Naive thymus-derived CD4-positive, alpha-beta T cell (primary cell): ENCODE measurements at regions of chrX and their contacts with region 1.

Region 1: DNA sequence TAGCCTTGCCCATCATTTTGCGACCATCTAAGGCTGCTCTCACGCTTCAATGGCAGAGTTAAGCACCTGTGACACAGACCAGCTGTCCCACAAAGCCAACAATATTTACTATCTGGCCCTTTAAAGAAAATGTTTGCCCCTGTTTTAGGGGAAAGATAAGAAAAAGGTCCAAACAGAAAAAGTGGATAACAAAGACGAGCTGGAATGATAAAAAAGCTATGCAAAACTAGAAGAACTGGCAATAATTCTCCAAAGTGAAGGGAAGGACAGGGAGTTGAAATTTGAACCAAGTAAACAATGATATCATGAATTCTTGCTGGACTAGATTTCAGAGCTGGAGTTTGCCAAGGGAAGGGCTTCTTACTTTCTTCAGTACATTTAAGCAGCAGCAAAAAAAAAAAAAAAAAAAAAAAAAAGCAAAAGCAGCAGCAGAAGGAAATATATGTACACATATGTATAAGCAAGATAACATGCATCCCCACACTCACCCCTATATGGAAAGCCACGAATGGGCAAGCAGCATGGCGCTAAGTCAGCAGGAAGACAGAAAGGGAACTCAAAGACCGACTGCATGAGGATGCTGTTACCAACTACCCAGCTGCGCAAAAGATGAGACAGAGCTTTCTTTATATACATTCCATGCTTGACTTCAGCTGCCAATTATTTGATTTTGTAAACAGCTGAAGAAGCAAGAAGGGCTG is 12.5 kb downstream of the TRAPPC2 start:
- DNase-seq: no peak
- ATAC-seq: no peak
- H3K4me3 ChIP-seq: no peak overlapping the region
- H3K4me3 Mint-ChIP-seq: no peak overlapping the region
- H3K27ac ChIP-seq: no peak overlapping the region
- H3K27ac Mint-ChIP-seq: peak overlapping the region in 5 of 9 donors; percentile 19 to 78 (median 47)
- H3K4me1 ChIP-seq: peaks cover 4 to 35% of the 10 kb centered on the region in 2 donors
- H3K4me1 Mint-ChIP-seq: peaks cover 20 to 78% (median 53%) of the 10 kb centered on the region in 7 donors
- H3K27me3 ChIP-seq: no peaks in the 10 kb centered on the region
- H3K27me3 Mint-ChIP-seq: no peaks in the 10 kb centered on the region

Region 2: DNA sequence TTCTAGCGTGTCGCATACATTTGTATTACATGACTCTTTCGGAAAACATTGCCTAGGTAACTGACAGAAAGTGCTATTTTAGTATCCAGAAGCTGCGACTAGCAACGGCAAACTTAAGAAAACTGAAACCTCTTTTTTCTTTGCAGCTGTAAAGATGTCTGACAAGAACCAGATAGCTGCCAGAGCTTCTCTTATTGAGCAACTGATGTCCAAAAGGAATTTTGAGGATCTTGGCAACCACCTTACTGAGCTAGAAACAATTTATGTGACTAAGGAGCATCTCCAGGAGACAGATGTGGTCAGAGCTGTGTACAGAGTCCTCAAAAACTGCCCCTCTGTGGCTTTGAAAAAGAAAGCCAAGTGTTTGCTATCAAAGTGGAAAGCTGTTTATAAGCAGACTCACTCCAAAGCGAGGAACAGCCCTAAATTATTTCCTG is 59.6 kb before region 1 on chrX:
- CTCF ChIA-PET with region 1: no interaction called
- POLR2A ChIA-PET with region 1: no interaction called
- intact Hi-C with region 1: no loop called
- DNase-seq: no peak
- ATAC-seq: no peak
- H3K4me3 ChIP-seq: no peak overlapping the region
- H3K4me3 Mint-ChIP-seq: no peak overlapping the region
- H3K27ac ChIP-seq: no peak overlapping the region
- H3K27ac Mint-ChIP-seq: no peak overlapping the region
- H3K4me1 ChIP-seq: no peaks in the 10 kb centered on the region
- H3K4me1 Mint-ChIP-seq: peaks cover 0 to 13% (median 11%) of the 10 kb centered on the region in 7 donors
- H3K27me3 ChIP-seq: no peaks in the 10 kb centered on the region
- H3K27me3 Mint-ChIP-seq: no peaks in the 10 kb centered on the region

Region 3: DNA sequence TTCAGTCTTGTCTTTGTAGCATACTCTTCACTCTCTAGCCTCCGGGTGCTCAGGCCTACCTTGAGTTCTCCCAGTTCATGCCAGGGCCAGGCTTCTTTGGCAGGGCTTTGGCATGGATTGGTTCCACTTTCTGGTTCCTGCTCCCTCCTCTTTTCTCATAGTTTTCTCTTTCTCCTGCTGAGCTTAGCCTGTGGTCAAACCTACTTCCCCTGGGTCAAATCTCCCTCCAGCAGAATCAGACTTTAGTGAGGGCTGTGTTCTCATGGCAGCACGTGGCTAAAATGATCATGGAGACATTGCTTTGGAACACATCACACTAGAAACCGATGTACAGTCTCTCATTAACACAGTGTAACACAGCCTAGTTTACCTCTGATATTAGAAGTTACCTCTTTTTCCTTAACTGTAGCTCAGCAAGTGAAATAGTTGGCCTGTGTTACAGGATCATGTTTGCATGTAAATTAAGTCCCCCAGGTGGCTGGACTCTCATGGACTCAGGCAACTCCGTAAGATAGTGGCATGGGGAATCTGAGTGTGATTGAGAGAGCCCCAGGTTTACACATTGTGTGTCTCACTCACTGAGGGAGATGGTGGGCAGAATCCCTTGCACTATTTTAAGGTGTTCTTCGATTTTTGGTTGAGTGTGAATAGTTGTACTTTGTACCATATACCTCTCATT is 19.7 kb before region 1 on chrX:
- CTCF ChIA-PET with region 1: no interaction called
- POLR2A ChIA-PET with region 1: interaction called, 3 read pairs
- intact Hi-C with region 1: loop called in 1 of 2 experiments (anchors 2 kb)
- DNase-seq: no peak
- ATAC-seq: no peak
- H3K4me3 ChIP-seq: no peak overlapping the region
- H3K4me3 Mint-ChIP-seq: peak overlapping the region in 3 of 10 donors; percentile 5 to 31 (median 13)
- H3K27ac ChIP-seq: peak overlapping the region; percentile 34
- H3K27ac Mint-ChIP-seq: peak overlapping the region in 6 of 9 donors; percentile 31 to 86 (median 66)
- H3K4me1 ChIP-seq: peaks cover 0 to 22% of the 10 kb centered on the region in 2 donors
- H3K4me1 Mint-ChIP-seq: peaks cover 14 to 64% (median 32%) of the 10 kb centered on the region in 7 donors
- H3K27me3 ChIP-seq: no peaks in the 10 kb centered on the region
- H3K27me3 Mint-ChIP-seq: no peaks in the 10 kb centered on the region

Region 4: DNA sequence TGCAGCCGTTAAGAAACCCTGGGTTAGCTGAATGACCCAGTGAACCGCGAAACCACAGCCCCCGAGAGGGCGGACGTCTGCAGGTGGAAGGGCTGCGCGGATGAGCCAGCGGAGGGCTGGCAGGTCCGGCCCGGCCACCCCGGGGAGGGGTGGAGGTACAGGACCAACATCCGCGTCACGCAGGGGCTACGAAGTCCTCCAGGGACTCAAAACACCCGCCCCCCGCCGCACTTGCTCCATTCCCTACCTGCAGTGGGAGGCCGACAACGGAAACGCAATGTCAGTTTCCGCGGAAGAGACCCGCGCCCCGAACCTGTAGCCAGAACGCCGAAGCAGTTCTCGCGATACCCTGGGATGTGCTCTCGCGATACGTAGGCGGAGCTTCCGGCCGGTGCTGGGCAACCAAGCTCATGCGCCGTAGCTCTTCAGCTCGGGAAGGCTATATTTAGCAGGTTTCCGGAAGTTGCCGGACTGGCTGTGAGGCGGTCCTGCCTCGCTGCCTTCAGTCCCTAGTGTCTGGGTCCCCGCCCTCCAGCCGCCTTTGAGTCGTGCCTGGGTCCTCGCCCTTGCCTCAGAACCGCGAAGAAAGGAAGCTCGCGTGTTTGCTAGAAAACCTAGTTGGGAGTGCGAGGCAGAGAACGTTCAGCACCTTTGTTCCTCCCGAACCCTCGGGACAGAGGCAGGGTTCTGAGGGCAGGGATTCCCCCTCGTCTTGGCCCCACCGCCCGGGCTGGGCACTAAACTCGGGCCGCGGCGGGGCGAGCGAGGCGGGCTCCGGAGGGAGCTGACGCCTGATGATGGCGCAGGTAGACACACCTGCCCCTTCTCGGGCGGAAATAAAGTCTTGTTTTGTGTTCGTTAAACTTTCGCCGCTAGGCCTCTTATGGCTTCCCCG is 12.6 kb after region 1 on chrX and contains the starts of genes OFD1 and TRAPPC2:
- CTCF ChIA-PET with region 1: interaction called, 4 read pairs
- POLR2A ChIA-PET with region 1: interaction called, 36 read pairs
- intact Hi-C with region 1: loop called in 1 of 2 experiments (anchors 1 kb)
- DNase-seq: peak; percentile 76 to 92 (median 87)
- ATAC-seq: peak; percentile 94
- H3K4me3 ChIP-seq: peak within 1 kb of the TSS; percentile 85
- H3K4me3 Mint-ChIP-seq: peak within 1 kb of the TSS; percentile 82 to 99 (median 94)
- H3K27ac ChIP-seq: peak within 1 kb of the TSS; percentile 99
- H3K27ac Mint-ChIP-seq: peak within 1 kb of the TSS; percentile 95 to 99 (median 97)
- H3K4me1 ChIP-seq: peaks cover 12 to 20% of the 10 kb centered on the region in 2 donors
- H3K4me1 Mint-ChIP-seq: peaks cover 21 to 66% (median 58%) of the 10 kb centered on the region in 7 donors
- H3K27me3 ChIP-seq: no peaks in the 10 kb centered on the region
- H3K27me3 Mint-ChIP-seq: no peaks in the 10 kb centered on the region
- total RNA-seq, gene OFD1: 30.4 to 142 (median 72.5) TPM
- total RNA-seq, gene TRAPPC2: 20.7 to 31.1 (median 23.5) TPM